ENCODE measurements at regions of chr2 and their contacts with region 1.

Region 1: DNA sequence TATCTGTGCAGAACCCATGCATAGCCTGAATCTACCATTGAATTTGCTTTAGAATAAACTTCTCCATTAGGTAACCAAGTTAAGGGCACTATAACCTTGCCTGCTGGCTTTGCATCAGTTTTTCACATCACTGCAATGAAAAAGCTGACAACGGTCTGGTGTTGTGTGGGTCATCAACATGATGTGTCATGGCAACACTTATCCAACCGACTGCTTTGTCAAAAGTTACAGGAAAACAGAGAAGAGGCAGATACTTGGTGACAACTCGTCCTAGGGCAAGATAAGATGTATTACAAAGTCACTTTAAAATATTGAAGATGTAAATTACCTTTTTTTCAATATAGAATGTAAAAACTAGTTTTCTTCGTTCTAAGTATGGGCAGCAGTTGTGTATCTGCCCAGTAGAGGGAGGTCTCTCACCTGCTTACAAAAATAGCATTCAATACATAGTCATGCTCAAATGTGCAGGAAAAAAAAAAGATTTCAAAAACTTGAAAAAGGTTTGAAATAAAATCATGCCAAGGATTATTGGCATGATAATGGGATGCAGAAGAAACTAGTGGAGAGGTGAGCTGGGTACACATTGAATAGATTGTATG is 96.3 kb downstream of the EVA1A start:
- DNase-seq: peak; percentile 43

Region 2: GRCh38 chr2:75627895-75628504 is 163.6 kb after region 1 on chr2:
- in situ Hi-C with region 1: loop called (anchors 5 kb)
- DNase-seq: peak; percentile 81